Posterior vena cava (tissue), 2 donors: ENCODE measurements at regions of chr17 and their contacts with region 1.

Region 1: DNA sequence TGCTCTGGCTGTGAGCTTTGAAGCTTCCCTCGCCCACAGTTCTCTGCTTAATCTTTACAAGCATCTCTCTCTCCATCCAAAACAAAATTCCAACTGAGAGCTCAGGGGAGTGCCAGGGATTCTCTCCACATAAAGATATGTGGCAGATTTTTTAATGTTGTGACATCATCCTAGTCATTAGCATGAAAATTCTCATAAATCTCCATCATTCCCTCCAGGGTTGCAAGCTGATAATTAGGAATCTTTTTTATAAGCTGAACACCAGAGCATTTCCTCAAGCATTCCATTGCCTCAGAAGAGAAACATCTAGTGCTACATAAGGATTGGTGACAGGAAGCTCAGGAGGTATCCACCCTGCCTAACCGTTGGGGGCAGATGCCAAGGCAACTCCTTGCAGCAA is 82.4 kb upstream of the DNAH9 start:
- DNase-seq: no peak

Region 2: DNA sequence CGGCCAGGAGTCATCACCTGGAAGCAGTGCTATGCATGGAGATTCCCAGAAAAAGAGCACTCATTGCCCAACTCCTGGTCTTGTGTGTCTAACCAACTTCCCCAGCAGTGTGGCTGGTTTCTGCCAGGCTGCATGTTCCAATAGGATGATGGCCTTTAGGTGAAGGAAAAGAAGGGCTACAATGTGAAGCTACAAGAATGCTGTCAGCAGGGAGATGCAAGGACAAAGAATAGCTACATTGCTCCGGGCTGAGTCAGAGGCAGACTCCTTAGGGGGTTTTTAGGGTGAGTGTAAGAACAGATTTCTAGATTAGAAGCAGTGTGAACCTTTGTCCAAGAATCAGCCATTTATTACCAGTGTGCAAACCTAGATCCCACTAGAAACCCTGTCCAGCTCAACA is 19.3 kb after region 1 on chr17:
- intact Hi-C with region 1: loop called in 1 of 2 experiments (anchors 1 kb)
- DNase-seq: no peak